Activated naive CD4-positive, alpha-beta T cell treated with anti-CD3 and anti-CD28 coated beads for 36 hours (primary cell): ENCODE measurements at regions of chr3 and their contacts with region 1.

Region 1: GRCh38 chr3:150384296-150385212 is 23.5 kb upstream of the TSC22D2 start:
- DNase-seq: peak; percentile 71
- H3K4me3 Mint-ChIP-seq: peak overlapping the region; percentile 56
- H3K27ac Mint-ChIP-seq: peak overlapping the region; percentile 66
- H3K4me1 Mint-ChIP-seq: peaks cover 20% of the 10 kb centered on the region
- H3K27me3 Mint-ChIP-seq: no peaks in the 10 kb centered on the region

Region 2: DNA sequence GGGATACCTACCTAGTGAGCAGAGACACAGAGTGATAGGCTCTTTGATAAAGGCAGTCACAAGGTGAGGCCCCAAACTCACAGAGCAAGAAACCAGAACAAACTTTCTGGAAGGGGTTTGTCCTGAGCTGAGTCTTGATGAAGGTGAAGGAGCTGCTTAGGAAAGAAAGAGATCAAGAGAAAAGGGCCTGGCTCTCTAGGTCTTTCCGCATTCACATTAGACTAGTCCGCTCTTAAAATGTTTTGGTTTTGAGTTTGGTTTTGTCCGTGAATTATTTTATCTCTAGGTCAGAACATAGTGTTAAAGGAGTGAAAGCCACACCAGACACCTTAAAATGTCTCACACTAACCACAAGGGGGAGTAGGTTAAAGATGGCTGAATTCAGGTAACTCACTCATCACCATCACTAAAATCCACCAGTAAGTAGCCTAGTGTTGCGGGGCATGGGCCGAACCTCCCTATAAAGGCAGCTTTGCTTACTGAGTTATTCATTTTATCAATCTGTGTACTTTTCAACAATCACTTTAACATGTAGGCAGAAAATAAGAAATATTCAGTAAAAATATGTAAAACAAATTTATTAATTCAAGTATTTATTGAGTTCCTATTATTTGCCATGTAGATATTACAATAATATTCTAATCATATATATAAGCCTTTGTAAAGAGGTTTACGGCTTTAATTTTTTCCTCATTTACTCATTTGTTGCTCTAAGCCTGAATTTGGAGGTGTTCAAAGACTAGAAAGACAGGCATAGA is 98.0 kb before region 1 on chr3:
- CTCF ChIA-PET with region 1: no interaction called
- intact Hi-C with region 1: loop called (anchors 1 kb)
- DNase-seq: peak; percentile 11
- H3K4me3 Mint-ChIP-seq: no peak overlapping the region
- H3K27ac Mint-ChIP-seq: no peak overlapping the region
- H3K4me1 Mint-ChIP-seq: no peaks in the 10 kb centered on the region
- H3K27me3 Mint-ChIP-seq: peaks cover 8% of the 10 kb centered on the region

Region 3: GRCh38 chr3:150396956-150397550 is 12.5 kb after region 1 on chr3:
- CTCF ChIA-PET with region 1: interaction called, 11 read pairs
- intact Hi-C with region 1: no loop called
- DNase-seq: no peak
- H3K4me3 Mint-ChIP-seq: no peak overlapping the region
- H3K27ac Mint-ChIP-seq: no peak overlapping the region
- H3K4me1 Mint-ChIP-seq: no peaks in the 10 kb centered on the region
- H3K27me3 Mint-ChIP-seq: no peaks in the 10 kb centered on the region